ENCODE measurements at regions of chr9 and their contacts with region 1.

Region 1: GRCh38 chr9:132274861-132275260 is 79.9 kb downstream of the SETX start:
- DNase-seq: no peak
- ATAC-seq: no peak
- H3K4me3 ChIP-seq: no peak overlapping the region
- H3K27ac ChIP-seq: no peak overlapping the region
- H3K4me1 ChIP-seq: peaks cover 9 to 17% of the 10 kb centered on the region in 2 experiments; a peak in 3 of 4 replicates
- H3K27me3 ChIP-seq: no peaks in the 10 kb centered on the region
- CTCF ChIP-seq: no peak
- POLR2A ChIP-seq: no peak
- RAD21 ChIP-seq: no peak

Region 2: GRCh38 chr9:131773911-131774379 is 500.9 kb before region 1 on chr9:
- CTCF ChIA-PET with region 1: no interaction called
- POLR2A ChIA-PET with region 1: no interaction called
- RAD21 ChIA-PET with region 1: no interaction called
- intact Hi-C with region 1: no loop called
- DNase-seq: no peak
- ATAC-seq: peak; percentile 75
- H3K4me3 ChIP-seq: no peak overlapping the region
- H3K27ac ChIP-seq: no peak overlapping the region
- H3K4me1 ChIP-seq: no peaks in the 10 kb centered on the region
- H3K27me3 ChIP-seq: peaks cover 32% of the 10 kb centered on the region
- CTCF ChIP-seq: no peak
- POLR2A ChIP-seq: no peak
- RAD21 ChIP-seq: no peak

Region 3: DNA sequence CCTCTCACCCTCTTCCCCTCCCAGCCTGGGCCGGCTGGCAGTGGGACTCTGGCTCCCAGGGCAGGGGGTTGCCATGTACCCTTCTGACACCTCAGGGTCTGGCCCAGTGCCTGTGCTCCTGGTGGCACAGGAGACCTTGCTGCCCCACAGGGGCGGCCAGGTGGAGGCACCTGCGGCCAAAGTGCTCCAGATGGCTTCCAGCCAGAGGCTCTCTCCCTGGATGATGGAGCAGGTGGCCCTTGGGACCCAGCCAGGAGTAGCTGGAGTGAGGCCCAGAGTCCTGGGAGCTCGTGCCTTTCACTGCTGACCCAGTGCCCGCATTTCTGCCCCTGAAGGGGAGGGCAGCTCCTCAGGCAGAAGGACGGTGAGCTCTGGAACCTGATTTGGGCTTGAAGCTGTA is 25.7 kb before region 1 on chr9:
- CTCF ChIA-PET with region 1: no interaction called
- POLR2A ChIA-PET with region 1: no interaction called
- RAD21 ChIA-PET with region 1: no interaction called
- intact Hi-C with region 1: no loop called
- DNase-seq: no peak
- ATAC-seq: no peak
- H3K4me3 ChIP-seq: no peak overlapping the region
- H3K27ac ChIP-seq: no peak overlapping the region
- H3K4me1 ChIP-seq: peaks cover 0 to 3% of the 10 kb centered on the region in 2 experiments; a peak in 1 of 4 replicates
- H3K27me3 ChIP-seq: no peaks in the 10 kb centered on the region
- CTCF ChIP-seq: no peak
- POLR2A ChIP-seq: no peak
- RAD21 ChIP-seq: no peak

Region 4: DNA sequence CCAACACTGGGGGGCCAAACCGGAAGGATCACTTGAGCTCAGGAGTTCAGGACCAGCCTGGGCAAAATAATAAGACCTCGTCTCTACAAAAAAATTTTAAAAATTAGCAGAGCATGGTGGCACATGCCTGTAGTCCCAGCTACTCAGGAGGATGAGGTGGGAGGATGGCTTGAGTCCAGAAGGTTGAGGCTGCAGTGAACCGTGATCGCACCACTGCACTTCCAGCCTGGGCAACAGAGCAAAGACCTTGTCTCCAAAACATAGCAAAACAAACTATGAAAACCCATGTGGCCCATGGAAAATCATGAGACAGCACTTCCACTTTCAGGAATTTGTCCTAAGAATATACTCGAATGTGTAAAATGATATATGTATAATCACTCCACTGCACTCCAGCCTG is 73.8 kb after region 1 on chr9:
- CTCF ChIA-PET with region 1: no interaction called
- POLR2A ChIA-PET with region 1: no interaction called
- RAD21 ChIA-PET with region 1: no interaction called
- intact Hi-C with region 1: loop called (anchors 5 kb)
- DNase-seq: no peak
- ATAC-seq: no peak
- H3K4me3 ChIP-seq: no peak overlapping the region
- H3K27ac ChIP-seq: no peak overlapping the region
- H3K4me1 ChIP-seq: peaks cover 3 to 6% of the 10 kb centered on the region in 2 experiments; a peak in 3 of 4 replicates
- H3K27me3 ChIP-seq: no peaks in the 10 kb centered on the region
- CTCF ChIP-seq: no peak
- POLR2A ChIP-seq: no peak
- RAD21 ChIP-seq: no peak